ENCODE measurements at regions of chr4 and their contacts with region 1.

Region 1: GRCh38 chr4:100093091-100093866 is 97.0 kb downstream of the DDIT4L start:
- DNase-seq: peak; percentile 58
- ATAC-seq: peak; percentile 97
- H3K4me3 Mint-ChIP-seq: no peak overlapping the region
- H3K27ac Mint-ChIP-seq: peak overlapping the region; percentile 78
- H3K4me1 Mint-ChIP-seq: peaks cover 32% of the 10 kb centered on the region
- H3K27me3 Mint-ChIP-seq: no peaks in the 10 kb centered on the region
- CTCF ChIP-seq: no peak

Region 2: GRCh38 chr4:100106982-100107381 is 13.7 kb after region 1 on chr4:
- CTCF ChIA-PET with region 1: interaction called, 17 read pairs
- POLR2A ChIA-PET with region 1: interaction called, 14 read pairs
- intact Hi-C with region 1: loop called (anchors 1 kb)
- DNase-seq: peak; percentile 19
- ATAC-seq: peak; percentile 99
- H3K4me3 Mint-ChIP-seq: peak overlapping the region; percentile 60
- H3K27ac Mint-ChIP-seq: peak overlapping the region; percentile 19
- H3K4me1 Mint-ChIP-seq: peaks cover 43% of the 10 kb centered on the region
- H3K27me3 Mint-ChIP-seq: no peaks in the 10 kb centered on the region
- CTCF ChIP-seq: no peak

Region 3: DNA sequence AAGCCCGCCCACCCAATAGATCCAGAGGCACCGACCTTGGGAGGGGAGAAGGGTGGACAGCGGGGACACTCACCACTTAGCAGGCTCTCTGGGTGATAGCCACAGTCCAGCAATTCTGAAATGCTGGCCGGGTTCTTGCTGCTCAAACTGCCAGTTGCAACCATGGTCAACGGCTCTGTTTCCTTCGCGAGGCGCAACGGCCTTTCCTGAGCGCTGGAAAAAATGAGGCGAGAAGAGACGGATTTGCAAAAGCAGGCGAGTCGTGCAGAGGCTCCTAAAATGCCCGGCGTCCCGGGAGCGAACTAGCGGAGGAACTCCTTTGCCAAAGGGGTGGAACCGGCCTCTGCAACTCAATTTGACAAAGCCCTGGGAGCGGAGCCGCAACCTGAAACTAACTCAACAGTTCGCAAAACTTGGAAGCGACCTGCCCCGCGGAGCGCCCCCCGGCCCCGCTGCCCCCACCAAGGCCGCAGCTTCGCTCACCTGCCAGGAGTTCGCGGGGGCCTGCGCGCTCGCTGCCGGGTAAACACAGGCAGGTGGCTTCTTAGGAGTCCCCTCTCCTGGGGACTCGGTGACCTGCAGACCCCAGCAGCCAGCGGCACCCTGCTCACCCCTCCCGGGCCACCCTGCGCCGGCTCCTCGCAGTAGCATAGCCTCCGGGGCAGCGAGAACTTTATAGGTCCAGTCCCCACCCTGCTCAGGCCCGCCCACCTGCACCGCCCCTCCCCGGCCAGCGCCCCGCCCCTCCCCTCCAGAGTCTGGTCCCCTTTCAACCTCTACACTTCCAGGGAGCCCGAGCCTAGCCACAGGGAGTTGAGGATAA is 96.8 kb after region 1 on chr4 and contains the start of gene DDIT4L:
- CTCF ChIA-PET with region 1: no interaction called
- POLR2A ChIA-PET with region 1: no interaction called
- intact Hi-C with region 1: loop called (anchors 1 kb)
- DNase-seq: no peak
- ATAC-seq: peak; percentile 77
- H3K4me3 Mint-ChIP-seq: peak within 1 kb of the TSS; percentile 82
- H3K27ac Mint-ChIP-seq: no peak within 1 kb of the TSS
- H3K4me1 Mint-ChIP-seq: peaks cover 15% of the 10 kb centered on the region
- H3K27me3 Mint-ChIP-seq: peaks cover 28% of the 10 kb centered on the region
- CTCF ChIP-seq: no peak
- total RNA-seq, gene DDIT4L: not detected in 2 replicates

Region 4: GRCh38 chr4:100372432-100372831 is 279.2 kb after region 1 on chr4:
- CTCF ChIA-PET with region 1: no interaction called
- POLR2A ChIA-PET with region 1: no interaction called
- intact Hi-C with region 1: loop called (anchors 2 kb)
- DNase-seq: no peak
- ATAC-seq: no peak
- H3K4me3 Mint-ChIP-seq: no peak overlapping the region
- H3K27ac Mint-ChIP-seq: no peak overlapping the region
- H3K4me1 Mint-ChIP-seq: no peaks in the 10 kb centered on the region
- H3K27me3 Mint-ChIP-seq: no peaks in the 10 kb centered on the region
- CTCF ChIP-seq: no peak

Region 5: DNA sequence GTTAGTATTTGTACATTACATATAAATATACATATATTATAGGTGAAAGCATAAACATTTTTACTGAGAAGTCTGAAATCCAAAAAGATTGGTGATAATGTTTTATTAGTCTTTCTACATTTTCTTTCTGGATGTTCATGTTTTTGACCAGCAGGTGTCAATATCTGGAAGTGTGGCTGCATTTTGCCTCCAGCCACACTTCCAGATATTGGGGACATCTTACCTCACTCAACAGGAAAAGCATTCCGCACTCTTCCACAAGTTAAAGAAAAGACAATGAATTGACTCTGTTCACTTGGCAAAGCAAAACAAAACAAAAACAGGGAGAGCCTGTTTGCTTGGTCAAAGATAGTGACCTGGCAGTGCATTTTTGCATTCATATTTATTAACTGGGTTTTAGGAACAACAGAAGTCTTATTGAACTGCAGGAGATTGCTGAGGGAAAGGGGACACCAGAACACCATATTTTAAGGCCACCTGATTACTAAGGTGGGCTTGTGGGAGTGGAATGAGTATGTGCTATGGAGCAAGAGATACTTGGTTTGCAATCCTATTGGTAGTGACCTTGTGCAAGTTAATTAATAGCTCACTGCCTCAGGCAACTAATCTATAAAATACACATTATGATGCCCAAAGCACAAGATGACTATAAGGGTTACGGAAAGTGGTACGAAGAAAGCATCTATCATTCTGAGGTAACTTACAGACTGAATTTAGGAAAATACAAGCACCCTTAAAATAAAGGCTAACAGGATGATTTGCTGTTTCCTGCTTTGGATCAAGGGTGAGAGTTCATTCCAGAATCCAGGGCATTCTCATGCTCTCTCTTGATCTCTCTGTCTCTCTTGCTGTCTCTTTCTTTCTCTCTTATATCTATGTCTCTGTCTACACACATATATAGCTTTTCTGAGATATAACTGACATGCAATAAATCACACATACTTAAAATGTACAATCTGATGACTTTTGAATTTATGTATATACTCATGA is 814.5 kb after region 1 on chr4:
- CTCF ChIA-PET with region 1: no interaction called
- POLR2A ChIA-PET with region 1: no interaction called
- intact Hi-C with region 1: loop called (anchors 5 kb)
- DNase-seq: no peak
- ATAC-seq: no peak
- H3K4me3 Mint-ChIP-seq: no peak overlapping the region
- H3K27ac Mint-ChIP-seq: no peak overlapping the region
- H3K4me1 Mint-ChIP-seq: no peaks in the 10 kb centered on the region
- H3K27me3 Mint-ChIP-seq: no peaks in the 10 kb centered on the region
- CTCF ChIP-seq: no peak

Region 6: DNA sequence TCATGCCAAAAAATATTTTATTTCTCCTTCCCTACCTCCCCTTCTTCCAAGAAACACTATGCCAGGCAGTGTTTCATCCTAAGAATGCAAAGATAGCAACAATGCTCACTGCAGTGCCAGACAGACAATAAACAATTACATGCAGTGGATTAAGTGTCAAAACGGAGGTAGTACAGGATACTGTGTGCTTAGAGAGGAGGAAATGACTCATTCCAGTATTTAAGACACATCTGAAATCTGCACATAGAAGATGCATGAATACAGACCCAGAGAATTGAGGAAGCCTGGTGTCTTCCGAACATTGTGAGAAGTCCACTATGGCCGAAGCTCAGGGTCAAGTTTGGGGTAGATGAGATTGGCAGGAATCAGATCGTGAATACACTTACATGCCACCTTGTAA is 927.7 kb after region 1 on chr4:
- CTCF ChIA-PET with region 1: interaction called, 4 read pairs
- POLR2A ChIA-PET with region 1: no interaction called
- intact Hi-C with region 1: loop called (anchors 10 kb)
- DNase-seq: no peak
- ATAC-seq: peak; percentile 72
- H3K4me3 Mint-ChIP-seq: no peak overlapping the region
- H3K27ac Mint-ChIP-seq: peak overlapping the region; percentile 18
- H3K4me1 Mint-ChIP-seq: peaks cover 36% of the 10 kb centered on the region
- H3K27me3 Mint-ChIP-seq: no peaks in the 10 kb centered on the region
- CTCF ChIP-seq: no peak

Measured in activated B cell treated with CpG ODN at 0.5 μM for 24 hours (primary cell).